ENCODE measurements at regions of chr20 and their contacts with region 1.

Region 1: GRCh38 chr20:44609511-44610312 is 27.3 kb downstream of the PKIG start:
- DNase-seq: no peak
- H3K4me3 ChIP-seq: peak overlapping the region in 3 of 4 donors; percentile 8 to 41 (median 23)
- H3K27ac ChIP-seq: peak overlapping the region; percentile 69 to 88 (median 84)
- H3K4me1 ChIP-seq: peaks cover 0 to 43% (median 25%) of the 10 kb centered on the region in 3 donors
- H3K27me3 ChIP-seq: no peaks in the 10 kb centered on the region
- CTCF ChIP-seq: peak; percentile 88 to 99 (median 97)
- POLR2A ChIP-seq: no peak

Region 2: GRCh38 chr20:44210422-44211176 is 399.1 kb before region 1 on chr20 and contains the start of gene OSER1:
- intact Hi-C with region 1: loop called (anchors 10 kb)
- DNase-seq: peak; percentile 90
- H3K4me3 ChIP-seq: peak within 1 kb of the TSS; percentile 76 to 98 (median 91)
- H3K27ac ChIP-seq: peak within 1 kb of the TSS; percentile 97 to 100 (median 100)
- H3K4me1 ChIP-seq: peaks cover 7 to 64% (median 24%) of the 10 kb centered on the region in 3 donors
- H3K27me3 ChIP-seq: no peaks in the 10 kb centered on the region
- CTCF ChIP-seq: peak in 2 of 6 experiments; percentile 24 to 25
- POLR2A ChIP-seq: peak in 3 of 4 donors; percentile 92 to 98 (median 94)
- total RNA-seq, gene OSER1: 16.1 to 62.2 (median 25.0) TPM

Region 3: GRCh38 chr20:44335675-44336440 is 273.9 kb before region 1 on chr20:
- intact Hi-C with region 1: no loop called
- DNase-seq: no peak
- H3K4me3 ChIP-seq: no peak overlapping the region
- H3K27ac ChIP-seq: no peak overlapping the region
- H3K4me1 ChIP-seq: no peaks in the 10 kb centered on the region
- H3K27me3 ChIP-seq: peaks cover 0 to 55% (median 0%) of the 10 kb centered on the region in 4 donors
- CTCF ChIP-seq: no peak
- POLR2A ChIP-seq: no peak

Region 4: GRCh38 chr20:44475694-44476560 is 133.8 kb before region 1 on chr20 and contains the start of gene TTPAL:
- intact Hi-C with region 1: loop called (anchors 10 kb)
- DNase-seq: peak; percentile 35
- H3K4me3 ChIP-seq: peak within 1 kb of the TSS; percentile 59 to 83 (median 76)
- H3K27ac ChIP-seq: peak within 1 kb of the TSS; percentile 90 to 97 (median 94)
- H3K4me1 ChIP-seq: peaks cover 3 to 23% (median 9%) of the 10 kb centered on the region in 3 donors
- H3K27me3 ChIP-seq: no peaks in the 10 kb centered on the region
- CTCF ChIP-seq: peak; percentile 32 to 75 (median 52)
- POLR2A ChIP-seq: peak in 3 of 4 donors; percentile 97 to 100 (median 97)
- total RNA-seq, gene TTPAL: 7.9 to 13.0 (median 11.6) TPM

Region 5: DNA sequence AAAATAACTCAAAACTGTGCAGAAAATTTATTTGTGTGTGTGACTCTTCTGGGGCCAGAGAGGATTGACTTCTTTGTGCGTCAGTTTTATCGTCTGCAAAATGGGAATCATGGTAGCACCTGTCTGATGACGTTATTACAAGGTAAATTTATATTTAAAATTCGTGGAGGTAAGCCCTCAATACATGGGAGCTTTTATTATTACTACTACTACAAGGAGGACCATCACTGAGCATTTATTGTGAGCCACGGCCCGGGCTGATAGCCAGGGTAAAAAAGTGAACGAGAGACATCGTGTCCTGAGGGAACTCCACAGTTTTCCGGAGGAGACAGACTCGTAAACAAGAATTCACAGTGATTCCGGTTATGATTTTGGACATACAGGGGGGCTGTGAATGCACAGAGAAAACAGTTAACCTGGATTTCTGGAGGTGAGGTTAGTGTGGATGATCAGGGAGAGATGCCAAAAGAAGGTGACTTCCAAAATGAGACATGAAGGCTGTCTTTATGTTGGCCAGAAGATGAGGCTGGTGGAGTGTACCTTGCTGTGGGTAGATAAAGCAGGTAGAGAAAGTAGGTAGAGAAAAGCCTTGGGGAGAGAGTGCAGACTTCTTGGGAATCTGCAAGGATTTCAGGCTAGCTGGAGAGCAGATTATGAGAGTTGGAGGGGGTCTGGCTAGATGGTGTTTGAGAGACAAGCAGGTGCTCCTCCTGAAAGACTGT is 77.3 kb before region 1 on chr20:
- intact Hi-C with region 1: loop called (anchors 10 kb)
- DNase-seq: no peak
- H3K4me3 ChIP-seq: peak overlapping the region; percentile 57 to 88 (median 79)
- H3K27ac ChIP-seq: peak overlapping the region; percentile 51 to 86 (median 80)
- H3K4me1 ChIP-seq: peaks cover 0 to 33% (median 8%) of the 10 kb centered on the region in 3 donors
- H3K27me3 ChIP-seq: no peaks in the 10 kb centered on the region
- CTCF ChIP-seq: no peak
- POLR2A ChIP-seq: no peak

Region 6: GRCh38 chr20:44702776-44703175 is 93.1 kb after region 1 on chr20:
- intact Hi-C with region 1: no loop called
- DNase-seq: peak; percentile 19
- H3K4me3 ChIP-seq: peak overlapping the region in 1 of 4 donors; percentile 1
- H3K27ac ChIP-seq: peak overlapping the region; percentile 66 to 87 (median 80)
- H3K4me1 ChIP-seq: peaks cover 6 to 54% (median 42%) of the 10 kb centered on the region in 3 donors
- H3K27me3 ChIP-seq: no peaks in the 10 kb centered on the region
- CTCF ChIP-seq: no peak
- POLR2A ChIP-seq: no peak